Lower leg skin (tissue), 4 donors: ENCODE measurements at regions of chr9 and their contacts with region 1.

Region 1: DNA sequence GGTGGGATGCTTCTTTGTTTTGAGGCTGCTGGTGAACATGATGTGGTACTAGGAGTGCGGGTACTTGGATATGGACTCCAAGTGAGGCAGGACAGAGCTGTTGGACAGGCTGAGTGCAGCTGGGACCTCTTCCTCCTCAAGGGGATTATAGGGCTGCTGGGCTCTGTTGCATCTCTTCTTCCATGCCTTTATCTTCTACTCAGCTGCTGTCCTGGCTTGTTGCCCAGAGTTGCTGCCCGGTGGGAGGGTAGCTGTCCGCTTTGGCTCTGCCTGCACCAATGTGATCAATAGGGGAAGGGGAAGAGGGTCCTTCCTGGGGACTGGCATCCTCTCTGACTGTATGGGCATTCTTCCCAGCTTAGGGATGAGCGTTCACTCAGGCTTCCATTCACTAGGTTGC is 1217.9 kb upstream of the ACO1 start:
- DNase-seq: no peak
- H3K4me3 ChIP-seq: no peak overlapping the region
- CTCF ChIP-seq: no peak
- POLR2A ChIP-seq: no peak

Region 2: DNA sequence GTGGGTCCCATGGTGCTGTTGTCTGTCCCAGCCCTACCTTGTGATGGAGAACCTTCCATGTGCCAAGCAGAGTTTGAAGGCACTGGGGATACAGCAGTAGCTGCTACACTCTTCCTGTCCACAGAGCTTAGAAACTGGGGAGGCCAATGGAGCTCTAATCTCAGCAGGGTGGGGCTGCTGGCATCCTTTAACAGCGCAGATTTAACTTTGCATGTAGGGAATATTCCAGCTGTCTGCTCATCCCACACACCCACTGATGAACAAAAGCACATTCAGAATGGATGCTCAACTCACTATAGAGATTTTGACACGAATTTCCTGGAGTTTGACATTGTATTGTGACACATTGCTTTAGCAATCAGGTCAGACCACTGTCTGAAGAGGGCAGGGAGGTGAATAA is 1665.8 kb after region 1 on chr9:
- intact Hi-C with region 1: loop called (anchors 5 kb)
- DNase-seq: no peak
- H3K4me3 ChIP-seq: no peak overlapping the region
- CTCF ChIP-seq: no peak
- POLR2A ChIP-seq: no peak